ENCODE measurements at regions of chr1 and their contacts with region 1.

Region 1: DNA sequence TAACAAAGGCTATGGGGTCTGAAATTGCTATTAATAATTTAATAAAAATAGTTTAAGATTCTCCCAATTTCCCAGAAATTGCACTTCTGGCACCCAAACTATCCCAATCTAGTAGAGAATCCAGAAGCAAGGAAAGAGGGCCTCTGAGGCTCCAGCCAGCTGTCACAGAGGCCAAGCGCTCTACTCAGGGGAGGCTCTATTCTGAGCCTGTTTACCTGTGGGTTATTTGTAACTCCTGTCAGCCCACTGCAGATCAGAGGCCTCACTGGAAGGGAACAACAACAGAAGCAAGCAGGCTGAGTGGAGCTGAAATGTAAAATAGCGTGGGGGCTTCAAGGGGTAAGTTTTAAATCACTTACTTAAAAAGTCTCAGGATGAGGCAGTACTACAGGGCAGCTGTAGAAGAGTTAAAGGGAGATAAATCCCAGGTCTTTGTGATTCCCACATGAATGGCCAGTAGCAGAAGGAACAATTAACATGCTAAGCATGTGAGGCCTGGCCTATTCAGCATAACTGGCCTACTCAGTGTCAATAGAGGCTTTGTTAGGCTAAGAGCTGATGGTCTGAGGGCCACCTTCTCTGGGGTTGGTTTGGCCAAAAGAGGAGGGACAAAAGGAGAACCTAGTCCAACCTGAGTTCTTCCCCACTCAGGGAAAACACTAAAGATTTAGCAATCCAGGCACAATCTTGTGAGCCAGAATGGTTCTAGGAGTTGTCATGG is 12.8 kb downstream of the ZNF687 start:
- DNase-seq: no peak
- H3K4me3 ChIP-seq: no peak overlapping the region
- H3K4me3 Mint-ChIP-seq: no peak overlapping the region
- H3K27ac ChIP-seq: peak overlapping the region in 1 of 2 donors; percentile 46
- H3K27ac Mint-ChIP-seq: peak overlapping the region in 3 of 7 donors; percentile 10 to 36 (median 35)
- H3K4me1 ChIP-seq: peaks cover 0 to under 1% of the 10 kb centered on the region in 2 donors
- H3K4me1 Mint-ChIP-seq: peaks cover 5% of the 10 kb centered on the region
- H3K27me3 ChIP-seq: no peaks in the 10 kb centered on the region
- H3K27me3 Mint-ChIP-seq: peaks cover 0 to 2% (median 0%) of the 10 kb centered on the region in 3 donors
- CTCF ChIP-seq: no peak

Region 2: GRCh38 chr1:151146412-151147140 is 148.3 kb before region 1 on chr1 and contains the start of gene SEMA6C:
- intact Hi-C with region 1: no loop called
- DNase-seq: peak; percentile 69 to 85 (median 79)
- H3K4me3 ChIP-seq: peak within 1 kb of the TSS; percentile 59 to 93 (median 64)
- H3K4me3 Mint-ChIP-seq: peak within 1 kb of the TSS; percentile 93 to 100
- H3K27ac ChIP-seq: no peak within 1 kb of the TSS
- H3K27ac Mint-ChIP-seq: peak within 1 kb of the TSS; percentile 9 to 85 (median 50)
- H3K4me1 ChIP-seq: peaks cover 13 to 23% of the 10 kb centered on the region in 2 donors
- H3K4me1 Mint-ChIP-seq: peaks cover 24% of the 10 kb centered on the region
- H3K27me3 ChIP-seq: peaks cover 2 to 19% of the 10 kb centered on the region in 2 donors
- H3K27me3 Mint-ChIP-seq: peaks cover 30 to 43% (median 34%) of the 10 kb centered on the region in 3 donors
- CTCF ChIP-seq: no peak
- polyA plus RNA-seq, gene SEMA6C: 0.39 to 1.4 (median 0.97) TPM

Region 3: DNA sequence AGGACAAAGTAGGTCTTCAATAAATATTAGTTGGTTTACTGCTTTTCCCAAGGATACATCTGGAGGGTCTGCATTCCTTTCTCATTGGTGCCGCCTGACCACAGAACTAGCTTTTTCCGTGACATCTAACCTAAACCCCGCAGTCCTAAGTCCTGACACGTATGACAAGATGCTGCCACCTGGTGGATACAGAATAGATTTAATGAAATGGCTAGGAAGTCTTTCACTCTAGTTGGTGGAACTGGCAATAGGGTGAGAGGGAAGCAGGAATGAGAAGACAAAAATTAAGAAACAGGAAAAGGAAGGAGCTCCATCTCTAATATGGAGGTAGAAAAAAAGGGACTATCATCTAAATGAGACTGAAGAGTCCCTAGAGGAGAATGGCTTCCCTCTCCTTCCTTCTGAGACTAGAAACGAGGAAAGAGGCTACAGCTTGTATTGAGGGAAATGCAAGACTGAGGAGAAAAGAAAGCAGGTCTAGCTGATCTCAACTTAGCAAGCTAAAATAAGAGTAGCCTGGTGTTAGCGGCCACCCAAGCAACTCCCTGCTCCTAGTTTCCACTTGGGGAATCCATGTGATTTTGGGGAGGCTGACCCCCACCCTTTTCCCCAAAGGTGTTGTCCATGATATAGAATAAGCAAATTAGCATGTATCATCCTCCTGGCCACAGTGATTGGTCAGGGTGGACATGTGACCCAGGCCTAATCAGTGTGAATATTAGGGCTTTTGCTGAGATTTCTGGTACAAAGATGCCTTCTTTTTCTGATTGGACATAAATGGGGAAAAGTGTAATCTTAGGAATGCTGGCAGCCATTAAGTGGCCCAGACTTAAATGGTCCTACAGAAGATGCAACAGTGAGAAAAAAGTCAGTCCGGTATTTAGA is 46.2 kb after region 1 on chr1:
- intact Hi-C with region 1: loop called in 1 of 2 experiments (anchors 2 kb)
- DNase-seq: peak; percentile 68 to 84 (median 83)
- H3K4me3 ChIP-seq: no peak overlapping the region
- H3K4me3 Mint-ChIP-seq: no peak overlapping the region
- H3K27ac ChIP-seq: peak overlapping the region; percentile 26 to 57
- H3K27ac Mint-ChIP-seq: peak overlapping the region; percentile 3 to 91 (median 63)
- H3K4me1 ChIP-seq: peaks cover 14 to 20% of the 10 kb centered on the region in 2 donors
- H3K4me1 Mint-ChIP-seq: peaks cover 24% of the 10 kb centered on the region
- H3K27me3 ChIP-seq: no peaks in the 10 kb centered on the region
- H3K27me3 Mint-ChIP-seq: no peaks in the 10 kb centered on the region
- CTCF ChIP-seq: peak; percentile 81